ENCODE measurements at regions of chr10 and their contacts with region 1.

Region 1: GRCh38 chr10:102835007-102835482 is 2.2 kb downstream of the CYP17A1 start:
- DNase-seq: peak; percentile 70 to 75 (median 74)
- ATAC-seq: peak; percentile 76 to 94 (median 92)
- H3K4me3 ChIP-seq: no peak overlapping the region
- H3K27ac ChIP-seq: no peak overlapping the region
- H3K4me1 ChIP-seq: peaks cover 0 to 14% (median 0%) of the 10 kb centered on the region in 12 donors
- H3K27me3 ChIP-seq: no peaks in the 10 kb centered on the region
- CTCF ChIP-seq: peak; percentile 81 to 92 (median 86)
- POLR2A ChIP-seq: no peak

Region 2: GRCh38 chr10:102894466-102895213 is 59.6 kb after region 1 on chr10:
- intact Hi-C with region 1: loop called in 2 of 10 experiments (anchors 5 kb)
- DNase-seq: no peak
- ATAC-seq: no peak
- H3K4me3 ChIP-seq: no peak overlapping the region
- H3K27ac ChIP-seq: no peak overlapping the region
- H3K4me1 ChIP-seq: no peaks in the 10 kb centered on the region
- H3K27me3 ChIP-seq: no peaks in the 10 kb centered on the region
- CTCF ChIP-seq: no peak
- POLR2A ChIP-seq: no peak

Region 3: GRCh38 chr10:103069453-103070331 is 234.6 kb after region 1 on chr10:
- intact Hi-C with region 1: loop called (anchors 2 to 10 kb)
- DNase-seq: peak in 4 of 5 donors; percentile 37 to 68 (median 56)
- ATAC-seq: peak; percentile 40 to 84 (median 73)
- H3K4me3 ChIP-seq: no peak overlapping the region
- H3K27ac ChIP-seq: no peak overlapping the region
- H3K4me1 ChIP-seq: peaks cover 0 to 18% (median 0%) of the 10 kb centered on the region in 12 donors
- H3K27me3 ChIP-seq: no peaks in the 10 kb centered on the region
- CTCF ChIP-seq: peak; percentile 47 to 77 (median 64)
- POLR2A ChIP-seq: no peak

Region 4: DNA sequence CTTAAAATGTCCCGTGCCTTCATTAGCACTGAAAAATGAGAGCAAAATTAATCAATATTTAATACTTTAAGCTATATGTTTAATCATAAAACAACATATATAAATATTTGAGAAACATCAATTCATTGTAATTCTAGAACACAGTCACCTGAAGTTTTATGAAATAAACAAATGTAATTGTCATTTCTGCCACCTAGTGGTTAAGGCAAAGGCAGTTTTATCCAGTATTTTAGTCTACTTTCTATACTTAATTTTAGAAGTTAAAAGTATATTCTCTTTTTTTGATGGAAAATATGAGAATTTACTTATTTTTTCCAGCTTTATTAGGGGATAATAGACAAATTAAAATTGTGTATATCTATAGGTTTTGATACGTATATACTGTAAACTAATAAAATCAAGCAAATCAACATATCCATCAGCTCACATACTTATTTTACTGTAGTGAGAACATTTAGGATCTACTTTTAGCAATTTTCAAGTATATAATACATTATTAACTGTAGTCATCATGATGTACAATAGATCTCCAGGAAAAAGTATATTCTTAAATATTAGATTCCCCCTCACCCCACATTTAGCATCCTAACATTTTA is 499.0 kb after region 1 on chr10:
- intact Hi-C with region 1: loop called in 1 of 10 experiments (anchors 10 kb)
- DNase-seq: no peak
- ATAC-seq: no peak
- H3K4me3 ChIP-seq: no peak overlapping the region
- H3K27ac ChIP-seq: no peak overlapping the region
- H3K4me1 ChIP-seq: no peaks in the 10 kb centered on the region
- H3K27me3 ChIP-seq: no peaks in the 10 kb centered on the region
- CTCF ChIP-seq: peak; percentile 39 to 69 (median 61)
- POLR2A ChIP-seq: no peak